Posterior vena cava (tissue), 2 donors: ENCODE measurements at regions of chr12 and their contacts with region 1.

Region 1: DNA sequence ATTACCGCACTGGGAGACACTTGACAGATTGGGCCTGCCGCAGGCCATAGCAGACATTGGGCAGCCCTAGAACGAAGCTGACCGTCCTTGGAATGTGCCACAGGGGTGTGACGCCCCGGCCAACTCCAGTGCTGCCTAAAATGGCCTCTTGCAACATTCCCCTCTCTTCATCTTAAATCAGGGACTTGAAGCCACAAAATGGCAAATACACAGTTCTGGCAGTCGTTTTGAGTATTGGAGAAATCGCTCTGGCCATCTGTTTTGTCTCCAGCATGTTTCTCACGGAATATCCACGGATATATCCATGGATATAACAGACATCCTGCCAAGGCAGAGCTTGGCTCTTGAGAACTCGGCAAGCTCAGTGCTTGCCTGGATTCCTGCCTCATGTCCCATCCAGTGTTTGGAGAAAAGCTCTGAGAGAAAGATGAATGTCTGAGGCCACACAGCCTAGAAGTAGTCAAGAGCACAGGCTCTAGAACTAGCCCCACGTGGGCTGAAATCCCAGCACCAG is 158.4 kb downstream of the CHST11 start:
- DNase-seq: no peak

Region 2: GRCh38 chr12:103947871-103948555 is 667.1 kb before region 1 on chr12:
- intact Hi-C with region 1: no loop called
- DNase-seq: no peak

Region 3: DNA sequence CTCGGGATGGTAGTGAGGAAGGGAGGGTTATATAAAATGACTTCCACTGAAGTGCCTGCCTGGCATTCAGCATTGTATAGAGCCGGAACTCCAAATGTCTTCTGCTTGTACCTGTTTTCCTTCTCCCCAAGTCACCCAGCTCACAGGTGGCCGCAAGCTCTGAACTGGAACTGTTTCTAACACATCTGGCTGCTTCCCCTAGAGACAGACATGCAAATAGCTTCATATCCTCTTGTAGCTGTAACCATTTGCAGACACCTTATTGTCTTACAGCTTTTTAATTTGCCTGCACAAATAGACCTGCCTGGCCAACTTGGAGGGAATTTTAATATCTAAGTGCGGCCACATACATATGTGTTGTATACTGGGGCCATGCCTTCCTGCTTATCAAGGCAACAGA is 32.4 kb before region 1 on chr12:
- intact Hi-C with region 1: loop called in 1 of 2 experiments (anchors 1 kb)
- DNase-seq: no peak